ENCODE measurements at regions of chr19 and their contacts with region 1.

Region 1: GRCh38 chr19:32798201-32798600 is 71.4 kb downstream of the SLC7A9 start:
- DNase-seq: no peak
- H3K4me3 Mint-ChIP-seq: no peak overlapping the region
- H3K27ac Mint-ChIP-seq: no peak overlapping the region
- H3K4me1 Mint-ChIP-seq: peaks cover 44% of the 10 kb centered on the region
- H3K27me3 Mint-ChIP-seq: no peaks in the 10 kb centered on the region

Region 2: DNA sequence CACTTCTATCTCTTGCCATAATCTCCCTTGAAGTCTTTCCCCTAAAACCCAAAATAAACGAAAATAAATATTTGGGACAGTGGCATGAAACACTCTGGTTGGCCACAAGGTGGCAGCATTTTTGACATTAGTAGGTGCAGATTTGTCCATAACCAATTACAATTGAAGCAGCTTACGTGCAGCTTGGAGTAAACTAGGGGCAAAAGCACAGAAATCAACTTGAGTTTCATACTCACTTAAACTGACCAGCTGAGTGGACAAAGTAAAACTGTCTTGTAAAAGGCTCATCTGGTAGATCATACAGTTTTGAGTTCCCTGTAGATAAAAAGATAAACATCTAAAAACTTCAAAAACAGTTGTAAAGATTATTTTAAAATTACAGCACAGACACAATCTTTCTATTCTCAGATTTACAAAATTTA is 198.5 kb before region 1 on chr19:
- CTCF ChIA-PET with region 1: no interaction called
- intact Hi-C with region 1: loop called (anchors 10 kb)
- DNase-seq: peak; percentile 62
- H3K4me3 Mint-ChIP-seq: no peak overlapping the region
- H3K27ac Mint-ChIP-seq: no peak overlapping the region
- H3K4me1 Mint-ChIP-seq: peaks cover 7% of the 10 kb centered on the region
- H3K27me3 Mint-ChIP-seq: no peaks in the 10 kb centered on the region

Region 3: DNA sequence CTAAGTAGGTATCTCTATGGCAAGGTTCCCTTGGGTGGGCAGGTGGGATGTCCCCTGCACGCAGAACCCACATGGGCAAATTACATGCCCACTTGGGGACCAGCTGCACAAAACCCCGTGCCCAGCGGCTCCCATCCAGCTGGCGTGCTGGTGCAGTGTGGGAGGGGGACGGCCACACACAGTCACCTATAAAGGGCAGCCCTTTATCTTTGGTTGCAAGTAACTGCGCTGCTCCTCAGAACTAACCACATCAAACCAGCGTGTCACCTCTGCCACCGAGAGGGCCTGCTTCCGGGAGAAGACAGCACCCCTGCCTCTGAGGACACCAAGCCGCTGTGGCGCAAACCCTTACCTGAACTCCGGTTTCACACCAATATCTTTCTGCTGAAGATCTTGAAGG is 155.4 kb before region 1 on chr19:
- CTCF ChIA-PET with region 1: no interaction called
- intact Hi-C with region 1: loop called (anchors 1 kb)
- DNase-seq: peak; percentile 86
- H3K4me3 Mint-ChIP-seq: no peak overlapping the region
- H3K27ac Mint-ChIP-seq: no peak overlapping the region
- H3K4me1 Mint-ChIP-seq: peaks cover 25% of the 10 kb centered on the region
- H3K27me3 Mint-ChIP-seq: no peaks in the 10 kb centered on the region

Region 4: GRCh38 chr19:32748497-32748896 is 49.7 kb before region 1 on chr19:
- CTCF ChIA-PET with region 1: no interaction called
- intact Hi-C with region 1: loop called (anchors 2 kb)
- DNase-seq: no peak
- H3K4me3 Mint-ChIP-seq: no peak overlapping the region
- H3K27ac Mint-ChIP-seq: no peak overlapping the region
- H3K4me1 Mint-ChIP-seq: peaks cover 14% of the 10 kb centered on the region
- H3K27me3 Mint-ChIP-seq: peaks cover 16% of the 10 kb centered on the region

Region 5: DNA sequence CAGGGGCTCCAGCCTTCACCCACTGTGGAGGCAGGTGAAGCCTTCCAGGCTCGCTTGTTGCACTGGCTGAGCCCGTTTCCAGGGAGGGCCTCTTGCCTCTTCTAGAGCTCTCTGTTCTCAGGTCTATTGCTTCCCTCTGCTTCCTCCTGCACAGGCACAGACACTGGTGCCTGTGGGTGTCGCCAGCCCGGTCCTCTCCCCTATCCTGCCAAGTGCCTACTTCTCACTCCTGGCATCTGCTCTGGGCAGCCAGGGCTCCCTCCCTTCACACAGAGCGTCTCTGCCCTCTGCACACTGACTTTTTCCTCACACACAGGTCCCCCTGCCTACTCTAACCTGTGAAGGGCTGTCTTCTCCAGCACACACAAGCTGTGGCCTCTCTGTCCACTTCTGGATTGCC is 11.1 kb after region 1 on chr19:
- CTCF ChIA-PET with region 1: interaction called, 3 read pairs
- intact Hi-C with region 1: loop called (anchors 1 kb)
- DNase-seq: no peak
- H3K4me3 Mint-ChIP-seq: no peak overlapping the region
- H3K27ac Mint-ChIP-seq: no peak overlapping the region
- H3K4me1 Mint-ChIP-seq: peaks cover 24% of the 10 kb centered on the region
- H3K27me3 Mint-ChIP-seq: no peaks in the 10 kb centered on the region

Measured in activated naive CD4-positive, alpha-beta T cell treated with anti-CD3 and anti-CD28 coated beads for 36 hours (primary cell).